Colonic mucosa (tissue), 4 donors: ENCODE measurements at regions of chr2 and their contacts with region 1.

Region 1: GRCh38 chr2:106638043-106638442 is 150.9 kb downstream of the CD8B2 start:
- DNase-seq: no peak
- H3K4me3 ChIP-seq: no peak overlapping the region
- H3K27ac ChIP-seq: no peak overlapping the region
- H3K4me1 ChIP-seq: no peaks in the 10 kb centered on the region
- H3K27me3 ChIP-seq: no peaks in the 10 kb centered on the region
- CTCF ChIP-seq: peak; percentile 24

Region 2: DNA sequence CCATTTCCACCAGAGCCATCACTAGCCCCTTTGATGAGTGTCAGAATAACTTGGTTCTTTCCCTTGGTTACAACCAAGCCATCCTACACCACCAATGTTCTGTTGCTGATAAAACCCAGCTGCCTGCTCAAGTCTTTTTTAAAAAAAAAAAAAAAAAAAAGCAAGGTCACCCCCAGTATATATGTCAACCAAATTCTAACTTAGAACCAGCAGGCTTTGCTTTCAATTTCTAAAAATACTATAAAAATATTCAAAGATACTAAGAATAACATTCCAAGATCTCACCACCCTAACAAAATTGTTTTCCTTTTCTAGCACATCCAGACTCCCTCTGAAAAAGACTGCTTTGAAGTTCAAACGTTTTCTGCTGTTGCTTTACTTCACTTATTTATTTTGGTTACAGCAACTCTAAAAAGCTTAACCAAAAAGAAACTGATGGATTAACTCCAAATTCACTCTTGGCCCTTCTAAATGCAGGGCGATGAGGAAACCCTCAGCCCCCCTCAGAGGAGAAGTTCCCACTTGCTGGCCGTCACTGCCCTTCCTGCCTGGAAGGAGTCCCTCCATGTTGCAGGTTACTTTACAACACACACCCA is 454.8 kb before region 1 on chr2:
- intact Hi-C with region 1: no loop called
- DNase-seq: no peak
- H3K4me3 ChIP-seq: no peak overlapping the region
- H3K27ac ChIP-seq: no peak overlapping the region
- H3K4me1 ChIP-seq: no peaks in the 10 kb centered on the region
- H3K27me3 ChIP-seq: no peaks in the 10 kb centered on the region
- CTCF ChIP-seq: no peak

Region 3: DNA sequence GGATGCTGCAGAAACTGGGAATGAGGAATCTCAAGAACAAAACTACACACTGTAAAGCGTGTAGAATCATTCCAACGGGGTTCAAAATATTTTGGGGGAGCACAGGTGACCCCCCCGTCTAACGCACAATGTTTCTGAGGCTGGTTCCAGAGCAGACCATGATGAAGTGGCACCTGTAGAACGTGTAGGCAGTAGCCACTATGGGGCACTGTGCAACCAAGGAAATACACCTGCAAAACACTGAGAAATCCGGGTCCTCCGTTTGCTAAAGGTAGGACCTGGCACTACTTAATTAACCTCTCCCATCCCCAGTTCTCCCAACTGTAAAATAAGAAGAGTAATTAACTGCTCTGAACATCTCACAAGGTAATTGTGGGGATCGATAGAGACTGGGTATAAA is 225.3 kb after region 1 on chr2:
- intact Hi-C with region 1: loop called (anchors 5 kb)
- DNase-seq: no peak
- H3K4me3 ChIP-seq: no peak overlapping the region
- H3K27ac ChIP-seq: no peak overlapping the region
- H3K4me1 ChIP-seq: no peaks in the 10 kb centered on the region
- H3K27me3 ChIP-seq: no peaks in the 10 kb centered on the region
- CTCF ChIP-seq: no peak

Region 4: DNA sequence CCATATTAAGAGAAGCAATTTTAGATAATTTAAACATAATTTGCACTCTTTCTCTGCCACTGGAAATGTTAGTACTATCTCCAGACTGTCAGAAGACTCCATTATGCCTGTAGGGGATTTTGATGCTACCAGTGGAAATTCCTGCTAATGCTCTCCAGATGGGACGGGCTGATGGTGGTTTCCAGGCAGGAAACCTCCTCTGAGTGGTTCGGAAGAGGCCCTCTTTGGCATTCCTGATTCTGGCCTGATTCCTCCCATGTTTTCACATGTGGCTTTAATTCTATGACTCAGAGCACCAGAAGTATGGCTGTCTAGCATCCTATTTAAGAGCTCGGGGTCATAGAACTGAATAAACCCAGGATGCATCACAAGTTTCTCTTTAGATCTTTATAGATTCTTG is 318.8 kb after region 1 on chr2:
- intact Hi-C with region 1: no loop called
- DNase-seq: no peak
- H3K4me3 ChIP-seq: no peak overlapping the region
- H3K27ac ChIP-seq: no peak overlapping the region
- H3K4me1 ChIP-seq: no peaks in the 10 kb centered on the region
- H3K27me3 ChIP-seq: no peaks in the 10 kb centered on the region
- CTCF ChIP-seq: no peak

Region 5: GRCh38 chr2:108184419-108184818 is 1546.4 kb after region 1 on chr2:
- intact Hi-C with region 1: loop called (anchors 10 kb)
- DNase-seq: no peak
- H3K4me3 ChIP-seq: no peak overlapping the region
- H3K27ac ChIP-seq: no peak overlapping the region
- H3K4me1 ChIP-seq: no peaks in the 10 kb centered on the region
- H3K27me3 ChIP-seq: no peaks in the 10 kb centered on the region
- CTCF ChIP-seq: peak; percentile 36